Naive thymus-derived CD4-positive, alpha-beta T cell (primary cell): ENCODE measurements at regions of chr16 and their contacts with region 1.

Region 1: DNA sequence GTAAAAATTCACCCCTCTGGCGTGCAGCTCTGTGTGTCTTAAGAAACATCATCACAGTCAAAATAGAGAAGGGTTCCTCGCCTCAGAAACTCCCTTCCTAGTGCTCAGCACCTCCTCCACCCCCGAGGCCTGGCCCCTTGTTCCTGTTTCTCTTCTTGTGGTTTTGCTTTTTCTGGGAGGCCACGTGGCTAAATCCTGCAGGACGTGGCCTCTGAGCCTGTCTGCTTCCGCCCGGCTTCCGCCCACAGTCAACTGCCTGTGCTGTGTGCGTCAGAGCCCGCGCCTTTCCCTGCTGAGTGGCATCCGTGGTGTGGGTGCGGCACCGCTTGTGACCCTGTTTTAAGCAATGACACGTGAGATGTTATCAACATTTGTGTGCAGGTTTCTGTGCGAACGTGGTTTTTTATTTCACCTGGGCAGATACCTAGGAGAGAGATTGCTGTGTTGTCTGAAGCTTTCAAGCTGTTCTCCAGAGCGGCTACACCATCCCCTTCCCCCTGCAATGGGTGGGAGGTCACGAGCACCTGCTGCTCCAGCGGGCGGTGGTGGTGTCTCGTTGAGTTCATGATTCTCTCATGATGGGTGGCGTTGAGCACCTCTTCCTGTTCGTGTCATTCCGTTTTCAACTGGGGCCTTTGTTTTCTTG is 21.7 kb downstream of the ACSF3 start:
- DNase-seq: peak; percentile 73 to 98 (median 96)
- ATAC-seq: peak; percentile 95
- H3K4me3 ChIP-seq: peak overlapping the region; percentile 59
- H3K4me3 Mint-ChIP-seq: peak overlapping the region; percentile 81 to 92 (median 87)
- H3K27ac ChIP-seq: peak overlapping the region; percentile 89
- H3K27ac Mint-ChIP-seq: peak overlapping the region in 6 of 9 donors; percentile 95 to 100 (median 96)
- H3K4me1 ChIP-seq: peaks cover 30 to 52% of the 10 kb centered on the region in 2 donors
- H3K4me1 Mint-ChIP-seq: peaks cover 30 to 66% (median 50%) of the 10 kb centered on the region in 7 donors
- H3K27me3 ChIP-seq: no peaks in the 10 kb centered on the region
- H3K27me3 Mint-ChIP-seq: no peaks in the 10 kb centered on the region

Region 2: GRCh38 chr16:88569985-88570690 is 545.2 kb before region 1 on chr16 and contains the start of gene ZC3H18:
- CTCF ChIA-PET with region 1: no interaction called
- POLR2A ChIA-PET with region 1: no interaction called
- intact Hi-C with region 1: loop called (anchors 1 to 10 kb)
- DNase-seq: peak; percentile 93 to 99 (median 96)
- ATAC-seq: peak; percentile 99
- H3K4me3 ChIP-seq: peak within 1 kb of the TSS; percentile 84
- H3K4me3 Mint-ChIP-seq: peak within 1 kb of the TSS; percentile 81 to 93 (median 87)
- H3K27ac ChIP-seq: peak within 1 kb of the TSS; percentile 91
- H3K27ac Mint-ChIP-seq: peak within 1 kb of the TSS; percentile 45 to 93 (median 89)
- H3K4me1 ChIP-seq: peaks cover 21% of the 10 kb centered on the region in 2 donors
- H3K4me1 Mint-ChIP-seq: peaks cover 10 to 39% (median 34%) of the 10 kb centered on the region in 7 donors
- H3K27me3 ChIP-seq: no peaks in the 10 kb centered on the region
- H3K27me3 Mint-ChIP-seq: no peaks in the 10 kb centered on the region
- total RNA-seq, gene ZC3H18: 74.0 to 97.8 (median 82.6) TPM

Region 3: DNA sequence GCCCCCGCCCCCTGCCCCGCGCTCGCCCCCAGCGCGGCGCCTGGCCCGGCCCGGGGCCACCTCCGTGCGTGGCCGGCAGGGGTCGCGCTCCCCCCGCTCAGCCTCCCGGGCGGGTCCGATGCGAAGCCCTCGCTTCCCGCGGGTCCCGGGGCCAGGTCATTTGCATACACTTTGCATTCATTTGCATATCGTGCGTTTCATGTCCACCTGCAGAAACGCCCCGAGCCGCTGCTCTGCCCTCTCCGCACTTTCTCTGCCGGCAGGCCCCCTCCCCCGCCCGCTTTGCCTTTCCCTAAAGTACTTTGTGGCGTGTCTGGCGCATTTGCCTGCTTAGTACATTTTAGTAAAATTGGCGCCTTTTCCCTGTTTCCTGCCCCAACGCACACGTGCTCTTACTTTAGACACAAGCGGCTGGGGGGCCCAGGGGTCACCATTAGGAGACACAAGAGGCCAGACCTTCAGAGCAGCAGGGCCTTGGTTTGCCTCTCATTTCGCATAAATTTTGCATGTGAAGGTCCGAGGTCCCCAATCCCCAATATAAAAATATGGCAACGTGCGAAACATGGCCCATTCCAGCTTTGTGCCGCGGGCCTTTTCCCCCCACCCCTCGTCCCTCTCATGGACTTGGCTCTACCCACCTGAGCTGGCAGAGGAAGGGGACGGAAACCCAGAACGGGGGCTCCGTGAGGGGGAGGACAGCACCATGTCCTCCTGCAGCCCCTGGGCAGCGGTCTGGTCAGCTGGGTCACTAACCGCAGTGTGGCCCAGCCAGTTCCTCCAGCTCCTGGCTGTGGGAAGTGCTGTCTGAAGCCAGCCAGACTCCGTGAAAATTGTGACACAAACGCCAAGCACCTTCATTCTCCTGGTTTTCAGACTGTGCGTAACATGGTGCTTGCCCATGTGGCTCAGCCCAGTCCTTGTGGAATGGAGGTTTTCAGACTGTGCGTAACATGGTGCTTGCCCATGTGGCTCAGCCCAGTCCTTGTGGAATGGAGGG is 173.1 kb before region 1 on chr16:
- CTCF ChIA-PET with region 1: no interaction called
- POLR2A ChIA-PET with region 1: no interaction called
- intact Hi-C with region 1: loop called in 1 of 2 experiments (anchors 1 kb)
- DNase-seq: peak; percentile 21 to 67 (median 51)
- ATAC-seq: peak; percentile 76
- H3K4me3 ChIP-seq: no peak overlapping the region
- H3K4me3 Mint-ChIP-seq: peak overlapping the region; percentile 27 to 84 (median 52)
- H3K27ac ChIP-seq: no peak overlapping the region
- H3K27ac Mint-ChIP-seq: peak overlapping the region in 2 of 9 donors; percentile 1 to 41
- H3K4me1 ChIP-seq: peaks cover 3 to 6% of the 10 kb centered on the region in 2 donors
- H3K4me1 Mint-ChIP-seq: peaks cover 0 to 19% (median 5%) of the 10 kb centered on the region in 7 donors
- H3K27me3 ChIP-seq: peaks cover 0 to 15% of the 10 kb centered on the region in 2 donors
- H3K27me3 Mint-ChIP-seq: peaks cover 17 to 44% (median 25%) of the 10 kb centered on the region in 5 donors

Region 4: GRCh38 chr16:89074803-89075688 is 40.3 kb before region 1 on chr16:
- CTCF ChIA-PET with region 1: no interaction called
- POLR2A ChIA-PET with region 1: no interaction called
- intact Hi-C with region 1: no loop called
- DNase-seq: no peak
- ATAC-seq: no peak
- H3K4me3 ChIP-seq: no peak overlapping the region
- H3K4me3 Mint-ChIP-seq: no peak overlapping the region
- H3K27ac ChIP-seq: peak overlapping the region; percentile 48
- H3K27ac Mint-ChIP-seq: peak overlapping the region in 2 of 9 donors; percentile 29 to 81
- H3K4me1 ChIP-seq: no peaks in the 10 kb centered on the region
- H3K4me1 Mint-ChIP-seq: peaks cover 0 to 2% (median 0%) of the 10 kb centered on the region in 7 donors
- H3K27me3 ChIP-seq: no peaks in the 10 kb centered on the region
- H3K27me3 Mint-ChIP-seq: no peaks in the 10 kb centered on the region

Region 5: GRCh38 chr16:89093602-89094251 is 21.6 kb before region 1 on chr16 and contains the start of gene ACSF3:
- CTCF ChIA-PET with region 1: interaction called, 8 read pairs
- POLR2A ChIA-PET with region 1: interaction called, 65 read pairs
- intact Hi-C with region 1: loop called (anchors 1 kb)
- DNase-seq: peak; percentile 33 to 83 (median 60)
- ATAC-seq: peak; percentile 64
- H3K4me3 ChIP-seq: peak within 1 kb of the TSS; percentile 73
- H3K4me3 Mint-ChIP-seq: peak within 1 kb of the TSS; percentile 87 to 99 (median 96)
- H3K27ac ChIP-seq: peak within 1 kb of the TSS; percentile 73
- H3K27ac Mint-ChIP-seq: peak within 1 kb of the TSS; percentile 90 to 100 (median 97)
- H3K4me1 ChIP-seq: peaks cover 42 to 46% of the 10 kb centered on the region in 2 donors
- H3K4me1 Mint-ChIP-seq: peaks cover 37 to 51% (median 47%) of the 10 kb centered on the region in 7 donors
- H3K27me3 ChIP-seq: no peaks in the 10 kb centered on the region
- H3K27me3 Mint-ChIP-seq: peaks cover 0 to 13% (median 3%) of the 10 kb centered on the region in 5 donors
- total RNA-seq, gene ACSF3: 61.9 to 84.1 (median 74.3) TPM

Region 6: GRCh38 chr16:89171463-89172170 is 56.3 kb after region 1 on chr16 and contains the start of gene CDH15:
- CTCF ChIA-PET with region 1: interaction called, 4 read pairs
- POLR2A ChIA-PET with region 1: interaction called, 4 read pairs
- intact Hi-C with region 1: loop called in 1 of 2 experiments (anchors 1 kb)
- DNase-seq: peak; percentile 79 to 96 (median 91)
- ATAC-seq: peak; percentile 97
- H3K4me3 ChIP-seq: peak within 1 kb of the TSS; percentile 51
- H3K4me3 Mint-ChIP-seq: peak within 1 kb of the TSS; percentile 65 to 88 (median 76)
- H3K27ac ChIP-seq: no peak within 1 kb of the TSS
- H3K27ac Mint-ChIP-seq: peak within 1 kb of the TSS in 5 of 9 donors; percentile 51 to 86 (median 75)
- H3K4me1 ChIP-seq: peaks cover 8 to 21% of the 10 kb centered on the region in 2 donors
- H3K4me1 Mint-ChIP-seq: peaks cover 6 to 10% (median 7%) of the 10 kb centered on the region in 7 donors
- H3K27me3 ChIP-seq: no peaks in the 10 kb centered on the region
- H3K27me3 Mint-ChIP-seq: peaks cover 0 to 6% (median 0%) of the 10 kb centered on the region in 5 donors
- total RNA-seq, gene CDH15: not detected

Region 7: GRCh38 chr16:89201439-89202377 is 86.4 kb after region 1 on chr16:
- CTCF ChIA-PET with region 1: no interaction called
- POLR2A ChIA-PET with region 1: no interaction called
- intact Hi-C with region 1: loop called in 1 of 2 experiments (anchors 5 kb)
- DNase-seq: peak; percentile 62 to 89 (median 76)
- ATAC-seq: peak; percentile 94
- H3K4me3 ChIP-seq: no peak overlapping the region
- H3K4me3 Mint-ChIP-seq: peak overlapping the region; percentile 12 to 82 (median 74)
- H3K27ac ChIP-seq: no peak overlapping the region
- H3K27ac Mint-ChIP-seq: no peak overlapping the region
- H3K4me1 ChIP-seq: peaks cover 0 to 9% of the 10 kb centered on the region in 2 donors
- H3K4me1 Mint-ChIP-seq: peaks cover 0 to 22% (median 9%) of the 10 kb centered on the region in 7 donors
- H3K27me3 ChIP-seq: peaks cover 0 to 4% of the 10 kb centered on the region in 2 donors
- H3K27me3 Mint-ChIP-seq: peaks cover 22 to 47% (median 41%) of the 10 kb centered on the region in 5 donors

Region 8: GRCh38 chr16:89490387-89491237 is 375.3 kb after region 1 on chr16 and contains the start of gene ANKRD11:
- CTCF ChIA-PET with region 1: no interaction called
- POLR2A ChIA-PET with region 1: no interaction called
- intact Hi-C with region 1: loop called in 1 of 2 experiments (anchors 1 kb)
- DNase-seq: peak; percentile 99 to 100 (median 99)
- ATAC-seq: peak; percentile 93
- H3K4me3 ChIP-seq: peak within 1 kb of the TSS; percentile 92
- H3K4me3 Mint-ChIP-seq: peak within 1 kb of the TSS; percentile 89 to 98 (median 94)
- H3K27ac ChIP-seq: peak within 1 kb of the TSS; percentile 90
- H3K27ac Mint-ChIP-seq: peak within 1 kb of the TSS; percentile 92 to 99 (median 97)
- H3K4me1 ChIP-seq: peaks cover 44 to 48% of the 10 kb centered on the region in 2 donors
- H3K4me1 Mint-ChIP-seq: peaks cover 48 to 73% (median 53%) of the 10 kb centered on the region in 7 donors
- H3K27me3 ChIP-seq: no peaks in the 10 kb centered on the region
- H3K27me3 Mint-ChIP-seq: peaks cover 0 to 2% (median 0%) of the 10 kb centered on the region in 5 donors
- total RNA-seq, gene ANKRD11: 178 to 254 (median 240) TPM